Cardiac septum (tissue), 1 donor: ENCODE measurements at regions of chr12 and their contacts with region 1.

Region 1: DNA sequence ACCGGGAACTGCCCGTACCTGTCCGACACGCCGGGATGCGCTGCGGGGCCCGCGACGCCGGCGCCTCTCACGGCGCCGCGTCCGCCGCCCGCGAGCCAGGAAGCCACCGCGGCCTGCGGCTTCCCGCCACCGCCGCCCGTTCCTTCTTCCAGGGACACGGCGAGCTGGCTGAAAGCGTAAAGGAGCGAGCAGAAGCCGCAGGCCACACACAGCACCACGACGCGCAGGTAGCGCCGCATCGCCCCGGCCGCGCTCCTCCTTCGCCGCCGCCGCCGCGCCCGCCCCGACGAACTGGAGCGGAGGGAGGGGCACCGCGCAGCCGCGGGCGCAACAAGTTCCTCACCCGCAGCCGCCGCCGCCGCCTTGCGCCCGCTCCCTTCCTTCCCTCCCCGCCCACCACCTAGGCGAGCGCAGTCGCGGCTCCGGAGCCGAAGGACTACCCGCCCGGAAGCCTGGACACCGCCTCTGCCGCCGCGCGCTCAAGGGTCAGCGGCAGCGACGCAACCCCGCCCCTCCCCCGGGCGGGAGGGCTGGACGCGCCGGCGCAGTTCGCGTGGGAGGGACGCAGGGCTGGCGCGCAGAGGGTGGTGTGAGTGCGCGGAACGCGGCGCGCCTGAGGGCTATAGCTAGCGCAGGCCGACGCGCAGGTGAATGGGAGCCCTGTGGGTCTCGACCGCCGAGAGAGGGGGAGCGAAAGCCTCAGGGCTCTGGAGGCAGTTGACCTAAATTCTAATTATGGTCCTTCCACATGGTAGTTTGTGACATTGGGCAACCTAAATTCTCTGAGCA is at the start of gene GXYLT1:
- DNase-seq: peak; percentile 96
- total RNA-seq, gene GXYLT1: 6.5 TPM

Region 2: DNA sequence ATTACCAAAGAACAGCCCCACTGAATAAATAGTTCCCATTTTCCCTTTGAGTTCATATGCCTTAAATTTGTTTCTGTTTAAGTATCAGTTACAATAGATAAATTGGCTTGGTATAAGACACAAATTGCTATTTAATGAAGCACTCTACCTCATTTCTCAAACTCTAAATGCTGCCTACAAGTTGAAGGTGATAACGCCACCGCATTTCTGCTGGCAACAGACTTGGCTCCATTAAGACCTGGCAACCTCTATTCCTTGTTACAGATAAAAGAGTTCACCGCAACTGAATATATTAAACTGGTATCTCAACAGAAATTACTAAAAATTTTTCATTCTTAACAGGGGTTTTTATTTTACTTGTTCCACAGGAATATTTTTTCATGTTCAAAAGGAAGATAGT is 35.6 kb before region 1 on chr12:
- intact Hi-C with region 1: no loop called
- DNase-seq: no peak

Region 3: DNA sequence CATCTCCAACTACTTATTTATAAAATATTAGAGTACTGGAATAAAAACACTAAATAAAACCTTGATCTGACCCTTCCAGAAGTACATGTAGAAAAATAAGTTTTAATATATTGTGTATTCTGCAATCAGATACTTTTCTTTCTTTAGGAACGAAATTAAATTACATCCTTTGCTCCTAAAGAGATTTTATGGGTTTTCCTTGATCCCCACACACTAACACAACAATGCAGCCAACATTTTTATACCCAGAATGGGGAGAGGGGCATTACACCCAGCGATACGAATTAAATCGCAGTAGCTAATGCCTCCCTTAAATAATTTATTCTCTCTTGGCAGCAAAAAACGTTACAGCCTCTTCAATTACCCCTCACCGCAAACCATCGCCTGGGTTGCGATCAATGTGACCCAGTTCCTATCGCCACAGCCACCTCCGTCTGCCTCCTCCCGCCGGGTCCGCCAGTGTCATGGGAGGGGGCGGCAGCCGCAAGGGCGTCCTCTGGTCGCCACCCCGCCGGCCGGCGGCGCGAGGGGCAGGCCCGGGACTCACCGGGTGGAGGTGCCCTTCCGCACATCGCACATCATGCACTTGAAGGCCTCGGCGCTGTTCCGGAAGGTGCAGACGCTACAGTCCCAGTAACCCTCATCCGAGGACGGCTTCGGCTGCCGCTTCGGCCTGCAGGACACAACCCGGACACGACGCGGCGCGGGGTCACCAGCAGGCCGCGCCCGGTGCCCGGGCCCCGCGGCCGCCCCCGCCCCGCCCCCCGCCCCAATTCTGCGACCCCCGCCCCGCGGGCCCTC is 92.7 kb after region 1 on chr12:
- intact Hi-C with region 1: loop called (anchors 2 kb)
- DNase-seq: peak; percentile 88

Region 4: GRCh38 chr12:42325653-42326474 is 181.3 kb after region 1 on chr12 and contains the starts of genes PPHLN1 and ZCRB1:
- intact Hi-C with region 1: loop called (anchors 5 kb)
- DNase-seq: peak; percentile 92
- total RNA-seq, gene PPHLN1: 33.7 TPM
- total RNA-seq, gene ZCRB1: 57.1 TPM

Region 5: GRCh38 chr12:42568952-42569915 is 424.6 kb after region 1 on chr12:
- intact Hi-C with region 1: loop called (anchors 10 kb)
- DNase-seq: no peak